K562 (cell line): ENCODE measurements at regions of chr9 and their contacts with region 1.

Region 1: GRCh38 chr9:133149126-133150107 is 14.3 kb downstream of the GBGT1 start:
- DNase-seq: peak; percentile 95 to 98 (median 98)
- ATAC-seq: peak; percentile 86
- H3K4me3 ChIP-seq: peak overlapping the region; percentile 80
- H3K27ac ChIP-seq: peak overlapping the region; percentile 75
- H3K4me1 ChIP-seq: peaks cover 14 to 61% of the 10 kb centered on the region in 2 experiments
- H3K27me3 ChIP-seq: no peaks in the 10 kb centered on the region
- CTCF ChIP-seq: peak in 2 of 3 experiments; percentile 32 to 45; a peak in 4 of 6 replicates
- EP300 ChIP-seq: no peak
- POLR2A ChIP-seq: peak; percentile 84
- RAD21 ChIP-seq: no peak; a peak in 1 of 4 replicates

Region 2: DNA sequence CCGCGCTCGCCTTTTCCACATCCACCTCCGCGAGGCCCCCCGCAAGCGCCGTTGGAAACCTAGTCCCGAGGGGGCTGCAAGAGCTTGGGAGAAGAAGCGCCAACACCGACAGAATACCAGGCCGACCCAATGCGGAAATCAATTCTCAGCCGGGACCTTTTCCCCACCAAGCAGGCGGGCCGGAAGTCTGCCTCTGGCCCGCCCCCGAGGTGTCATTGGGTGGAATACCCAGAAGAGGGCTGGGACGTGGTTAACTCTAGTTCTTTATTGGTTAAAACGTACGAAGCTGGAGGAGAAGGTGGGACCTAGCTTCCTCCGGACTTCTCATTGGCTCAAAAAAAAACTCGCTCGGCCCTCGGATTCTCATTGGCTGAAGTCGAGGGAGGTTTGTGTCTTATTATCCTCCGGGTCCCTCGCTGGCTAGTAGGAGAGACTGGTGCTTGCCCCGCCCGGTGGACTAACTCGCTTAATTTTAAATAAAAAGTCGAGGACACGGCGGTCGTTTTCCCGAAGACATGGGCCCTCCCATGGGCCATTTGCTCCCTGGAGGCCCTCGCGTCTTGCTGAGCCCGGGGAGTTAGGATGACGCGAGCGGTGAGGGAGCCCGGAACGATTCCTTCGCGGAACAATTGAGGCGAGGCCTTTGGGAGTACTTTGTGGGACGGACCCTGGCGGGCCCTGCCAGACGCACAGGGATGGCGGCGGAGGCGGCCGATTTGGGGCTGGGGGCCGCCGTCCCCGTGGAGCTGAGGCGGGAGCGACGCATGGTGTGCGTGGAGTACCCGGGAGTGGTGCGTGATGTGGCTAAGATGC is 118.9 kb before region 1 on chr9 and contains the start of gene GTF3C5:
- CTCF ChIA-PET with region 1: no interaction called
- POLR2A ChIA-PET with region 1: interaction called, 4 read pairs
- in situ Hi-C with region 1: no loop called
- intact Hi-C with region 1: loop called (anchors 5 kb)
- DNase-seq: peak; percentile 96 to 99 (median 97)
- ATAC-seq: peak; percentile 98
- H3K4me3 ChIP-seq: peak within 1 kb of the TSS; percentile 99
- H3K27ac ChIP-seq: peak within 1 kb of the TSS; percentile 93
- H3K4me1 ChIP-seq: peaks cover 26 to 33% of the 10 kb centered on the region in 2 experiments; a peak in 4 of 5 replicates
- H3K27me3 ChIP-seq: no peaks in the 10 kb centered on the region
- CTCF ChIP-seq: no peak
- EP300 ChIP-seq: no peak
- POLR2A ChIP-seq: peak; percentile 81
- RAD21 ChIP-seq: 0 out of 4 replicates have a peak, but pooled peaks of 1 of the 2 experiments have one; percentile 5
- polyA plus RNA-seq, gene GTF3C5: 3.8 to 8.4 TPM

Region 3: DNA sequence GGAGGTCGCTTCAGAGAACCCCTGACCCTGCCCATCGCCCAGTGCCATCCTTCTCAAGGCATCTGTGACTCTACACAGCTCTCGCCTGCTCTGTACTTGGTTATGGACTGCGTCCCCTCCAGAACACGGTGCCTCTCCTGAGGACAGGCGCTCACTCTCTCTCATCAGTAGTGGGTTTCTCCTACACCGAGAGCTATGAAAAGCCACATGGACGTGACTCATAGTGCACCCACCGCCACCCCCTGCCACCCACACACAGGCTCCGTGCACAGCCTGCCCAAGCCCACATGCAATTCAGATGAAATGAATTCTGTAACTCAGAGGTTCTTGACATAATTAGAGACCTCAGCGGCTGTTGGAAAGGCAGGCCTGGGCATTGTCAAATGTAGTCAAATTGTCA is 104.8 kb before region 1 on chr9:
- CTCF ChIA-PET with region 1: interaction called, 7 read pairs
- POLR2A ChIA-PET with region 1: no interaction called
- in situ Hi-C with region 1: no loop called
- intact Hi-C with region 1: loop called (anchors 5 kb)
- DNase-seq: no peak
- ATAC-seq: no peak
- H3K4me3 ChIP-seq: no peak overlapping the region
- H3K27ac ChIP-seq: no peak overlapping the region
- H3K4me1 ChIP-seq: peaks cover 0 to 9% of the 10 kb centered on the region in 2 experiments; a peak in 2 of 5 replicates
- H3K27me3 ChIP-seq: no peaks in the 10 kb centered on the region
- CTCF ChIP-seq: no peak
- EP300 ChIP-seq: no peak
- POLR2A ChIP-seq: no peak
- RAD21 ChIP-seq: no peak

Region 4: DNA sequence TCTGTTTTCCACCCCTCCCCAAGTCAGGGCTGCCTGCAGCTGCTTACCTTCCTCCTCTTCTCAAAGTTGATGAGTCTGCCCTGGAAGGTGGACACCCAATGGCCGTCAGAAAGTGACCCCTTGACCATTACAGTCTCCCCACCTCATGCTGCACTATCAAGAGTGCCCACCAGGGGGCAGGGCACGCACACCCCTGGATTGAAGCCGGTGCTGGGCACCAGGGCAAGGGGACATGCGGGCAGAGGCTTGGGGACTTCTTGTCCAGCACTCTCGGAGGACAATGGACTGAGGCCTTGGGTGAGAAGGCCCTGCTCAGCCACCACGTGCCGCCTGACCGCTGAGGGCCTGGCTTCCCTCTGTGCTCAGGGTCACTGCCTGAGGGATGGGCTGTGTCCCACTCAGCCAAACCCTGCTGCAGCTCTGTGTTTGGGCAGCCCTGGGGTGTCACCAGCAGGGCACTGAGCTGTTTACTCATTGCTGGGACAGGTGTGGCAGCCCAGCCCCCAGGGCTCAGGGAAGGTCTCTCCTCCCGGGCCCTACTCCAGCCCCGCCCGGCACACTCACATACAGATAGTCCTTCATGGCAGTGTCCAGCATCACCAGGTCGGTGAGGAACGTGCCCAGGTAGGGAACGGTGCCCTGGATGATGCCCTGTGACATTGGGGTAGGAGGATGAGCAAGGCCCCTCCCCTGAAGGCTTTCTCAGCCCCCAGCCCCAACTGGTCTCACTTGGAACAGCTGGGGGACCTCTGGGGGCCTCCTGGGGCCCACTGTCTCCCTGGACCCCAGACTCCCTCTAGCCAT is 46.0 kb before region 1 on chr9:
- CTCF ChIA-PET with region 1: interaction called, 26 read pairs
- POLR2A ChIA-PET with region 1: interaction called, 5 read pairs
- in situ Hi-C with region 1: loop called (anchors 5 kb)
- intact Hi-C with region 1: loop called (anchors 1 kb)
- DNase-seq: peak; percentile 66 to 79 (median 72)
- ATAC-seq: peak; percentile 91
- H3K4me3 ChIP-seq: no peak overlapping the region
- H3K27ac ChIP-seq: no peak overlapping the region
- H3K4me1 ChIP-seq: peaks cover 0 to 12% of the 10 kb centered on the region in 2 experiments; a peak in 2 of 5 replicates
- H3K27me3 ChIP-seq: no peaks in the 10 kb centered on the region
- CTCF ChIP-seq: peak; percentile 87 to 95 (median 90)
- EP300 ChIP-seq: no peak
- POLR2A ChIP-seq: no peak
- RAD21 ChIP-seq: peak; percentile 92 to 98

Region 5: GRCh38 chr9:133188006-133188842 is 38.8 kb after region 1 on chr9:
- CTCF ChIA-PET with region 1: no interaction called
- POLR2A ChIA-PET with region 1: no interaction called
- in situ Hi-C with region 1: no loop called
- intact Hi-C with region 1: no loop called
- DNase-seq: peak; percentile 38 to 69 (median 52)
- ATAC-seq: peak; percentile 81
- H3K4me3 ChIP-seq: no peak overlapping the region
- H3K27ac ChIP-seq: no peak overlapping the region
- H3K4me1 ChIP-seq: peaks cover 4 to 15% of the 10 kb centered on the region in 2 experiments; a peak in 3 of 5 replicates
- H3K27me3 ChIP-seq: peaks cover 18 to 34% of the 10 kb centered on the region in 2 experiments; a peak in 4 of 5 replicates
- CTCF ChIP-seq: peak; percentile 68 to 75 (median 69)
- EP300 ChIP-seq: no peak
- POLR2A ChIP-seq: no peak
- RAD21 ChIP-seq: peak; percentile 25 to 66; a peak in 2 of 4 replicates